RWPE1 (cell line): ENCODE measurements at regions of chr20 and their contacts with region 1.

Region 1: GRCh38 chr20:45095753-45096371 is 5.1 kb downstream of the KCNS1 start:
- DNase-seq: peak; percentile 83
- H3K27ac ChIP-seq: no peak overlapping the region
- CTCF ChIP-seq: peak; percentile 98

Region 2: DNA sequence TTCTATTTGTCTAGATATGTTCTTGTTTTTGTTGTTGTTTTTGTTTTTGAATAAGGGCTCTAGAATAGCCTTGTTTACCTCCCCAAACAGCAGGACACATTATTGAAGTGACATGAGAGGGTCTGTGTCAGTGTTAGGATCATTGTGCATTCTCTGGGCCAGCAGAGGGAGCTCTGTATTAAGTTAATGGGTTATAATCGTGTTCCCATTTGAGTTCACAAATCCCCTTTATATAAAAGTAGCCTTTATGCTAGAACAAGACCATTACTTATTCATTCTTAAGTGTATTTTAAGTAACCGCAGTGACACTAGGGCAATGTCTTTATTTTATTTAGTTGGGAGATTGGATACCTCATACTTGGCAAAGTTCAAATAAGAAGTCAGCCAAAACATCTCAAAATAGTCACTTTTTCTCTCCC is 84.7 kb before region 1 on chr20:
- CTCF ChIA-PET with region 1: interaction called, 49 read pairs
- POLR2A ChIA-PET with region 1: no interaction called
- DNase-seq: peak; percentile 77
- H3K27ac ChIP-seq: no peak overlapping the region
- CTCF ChIP-seq: peak; percentile 95

Region 3: DNA sequence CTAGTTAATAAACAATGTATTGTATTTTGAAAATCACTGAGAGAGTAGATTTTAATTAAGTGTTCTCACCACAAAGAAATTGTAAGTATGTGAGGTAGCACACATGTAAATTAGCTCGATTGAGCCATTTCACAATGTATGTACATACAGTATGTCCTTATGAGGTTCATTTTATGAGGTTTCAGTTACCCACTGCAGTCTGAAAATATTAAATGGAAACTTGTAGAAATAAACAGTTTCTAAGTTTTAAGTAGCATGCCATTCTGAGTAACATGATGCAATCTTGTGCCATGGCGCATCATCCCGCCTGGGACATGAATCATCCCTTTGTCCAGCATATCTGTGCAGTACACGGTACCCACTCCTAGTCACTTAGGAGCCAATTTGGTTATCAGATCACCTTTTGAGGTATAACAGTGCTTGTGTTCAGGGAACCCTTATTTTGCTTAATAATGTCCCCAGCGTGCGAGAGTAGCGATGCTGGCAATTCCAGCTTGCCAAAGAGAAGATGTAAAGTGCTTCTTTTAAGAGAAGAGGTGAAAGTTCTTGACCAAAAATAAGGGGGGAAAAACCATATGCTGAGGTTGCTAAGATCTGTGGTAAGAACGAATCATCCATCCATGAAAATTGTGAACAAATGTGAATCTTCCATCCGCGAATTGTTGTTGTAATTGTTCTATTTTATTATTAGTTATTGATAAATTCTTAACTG is 59.7 kb before region 1 on chr20:
- CTCF ChIA-PET with region 1: interaction called, 171 read pairs
- POLR2A ChIA-PET with region 1: no interaction called
- DNase-seq: peak; percentile 69
- H3K27ac ChIP-seq: no peak overlapping the region
- CTCF ChIP-seq: no peak

Region 4: GRCh38 chr20:45052698-45053429 is 43.0 kb before region 1 on chr20:
- CTCF ChIA-PET with region 1: interaction called, 28 read pairs
- POLR2A ChIA-PET with region 1: no interaction called
- DNase-seq: no peak
- H3K27ac ChIP-seq: no peak overlapping the region
- CTCF ChIP-seq: no peak

Region 5: GRCh38 chr20:45070932-45071632 is 24.8 kb before region 1 on chr20:
- CTCF ChIA-PET with region 1: interaction called, 15 read pairs
- POLR2A ChIA-PET with region 1: no interaction called
- DNase-seq: peak; percentile 94
- H3K27ac ChIP-seq: peak overlapping the region; percentile 75
- CTCF ChIP-seq: no peak

Region 6: GRCh38 chr20:45111799-45112471 is 16.1 kb after region 1 on chr20:
- CTCF ChIA-PET with region 1: interaction called, 87 read pairs
- POLR2A ChIA-PET with region 1: no interaction called
- DNase-seq: no peak
- H3K27ac ChIP-seq: no peak overlapping the region
- CTCF ChIP-seq: peak; percentile 66

Region 7: DNA sequence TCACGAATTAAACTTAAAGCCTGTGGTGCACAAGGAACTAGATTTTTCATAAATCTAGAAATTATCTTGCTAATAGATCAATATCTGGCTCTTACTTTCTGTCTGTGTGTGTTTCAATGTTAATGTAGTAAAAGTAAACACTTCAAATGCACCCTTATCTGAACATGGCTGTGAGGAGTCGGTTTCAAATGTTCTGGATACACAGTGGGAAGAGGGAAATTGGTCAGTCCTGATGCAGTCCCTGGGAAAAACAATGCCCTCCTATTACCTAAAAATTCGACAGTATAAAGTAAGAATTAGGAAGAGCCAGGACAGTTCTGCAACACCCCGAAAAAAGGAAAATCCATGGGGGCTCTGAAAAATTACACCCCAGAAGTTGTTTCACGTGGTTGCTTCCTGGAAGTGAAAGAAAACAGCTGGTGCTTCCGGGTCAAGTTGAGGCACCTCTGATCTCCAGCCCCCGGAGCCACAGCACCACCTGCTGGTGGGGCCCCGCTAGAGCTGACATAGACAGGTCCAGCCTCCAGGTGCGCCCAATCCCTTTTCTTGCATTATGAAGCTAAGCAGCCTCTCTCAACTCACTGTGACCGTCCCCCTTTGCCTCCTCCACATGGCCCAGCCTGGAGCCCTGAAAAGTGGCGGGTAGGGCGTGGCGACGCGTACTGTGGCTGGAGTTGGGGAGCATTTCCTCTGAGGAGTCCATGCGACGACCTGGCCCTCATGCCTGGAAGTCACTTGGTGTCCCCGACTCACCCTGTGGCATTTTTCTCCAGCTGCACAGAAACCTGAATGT is 133.6 kb after region 1 on chr20:
- CTCF ChIA-PET with region 1: interaction called, 17 read pairs
- POLR2A ChIA-PET with region 1: no interaction called
- DNase-seq: peak; percentile 50
- H3K27ac ChIP-seq: no peak overlapping the region
- CTCF ChIP-seq: peak; percentile 57